Heart right ventricle (tissue), 16 donors: ENCODE measurements at regions of chr9 and their contacts with region 1.

Region 1: GRCh38 chr9:71703172-71703872 is 65.0 kb downstream of the CEMIP2 start:
- DNase-seq: no peak
- ATAC-seq: peak in 3 of 8 donors; percentile 36 to 62 (median 57)
- H3K4me3 ChIP-seq: no peak overlapping the region
- H3K27ac ChIP-seq: no peak overlapping the region
- H3K4me1 ChIP-seq: peaks cover 0 to 30% (median 12%) of the 10 kb centered on the region in 9 donors
- H3K27me3 ChIP-seq: no peaks in the 10 kb centered on the region
- CTCF ChIP-seq: no peak

Region 2: GRCh38 chr9:71614409-71615010 is 88.8 kb before region 1 on chr9:
- intact Hi-C with region 1: loop called in 2 of 10 experiments (anchors 5 kb)
- DNase-seq: no peak
- ATAC-seq: no peak
- H3K4me3 ChIP-seq: no peak overlapping the region
- H3K27ac ChIP-seq: no peak overlapping the region
- H3K4me1 ChIP-seq: no peaks in the 10 kb centered on the region
- H3K27me3 ChIP-seq: no peaks in the 10 kb centered on the region
- CTCF ChIP-seq: no peak